ENCODE measurements at regions of chr2 and their contacts with region 1.

Region 1: GRCh38 chr2:118046634-118047210 is 32.9 kb upstream of the CCDC93 start:
- DNase-seq: no peak
- ATAC-seq: peak; percentile 44; the same call in 2 of the 3 replicates
- H3K4me3 ChIP-seq: no peak overlapping the region
- H3K27ac ChIP-seq: no peak overlapping the region
- H3K4me1 ChIP-seq: peaks cover 7% of the 10 kb centered on the region; the same call in 1 of the 2 replicates
- H3K27me3 ChIP-seq: peaks cover 0 to 5% of the 10 kb centered on the region in 2 experiments; a peak in 2 of 4 replicates
- CTCF ChIP-seq: peak; percentile 50 to 73 (median 59)
- EP300 ChIP-seq: no peak
- POLR2A ChIP-seq: no peak
- RAD21 ChIP-seq: peak; percentile 94

Region 2: DNA sequence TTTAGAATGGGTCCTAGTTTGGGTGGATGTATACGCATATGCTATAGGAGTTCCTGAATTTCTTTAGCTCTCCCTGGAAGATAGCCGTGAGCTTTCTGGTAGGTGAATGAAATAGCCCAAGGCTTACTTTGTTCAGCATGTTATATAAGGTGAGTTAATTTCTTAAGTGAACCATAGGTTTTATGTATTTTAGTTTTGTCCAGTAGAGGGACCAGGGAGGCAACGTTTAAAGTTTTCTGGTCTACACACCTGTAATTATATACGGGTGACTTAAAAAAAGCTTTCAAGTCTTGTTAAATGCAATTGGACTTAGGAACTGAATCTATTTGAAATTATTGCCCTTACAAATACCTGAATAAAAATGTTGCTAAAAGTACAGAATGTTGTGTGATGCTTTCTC is 634.7 kb before region 1 on chr2:
- CTCF ChIA-PET with region 1: no interaction called
- POLR2A ChIA-PET with region 1: no interaction called
- RAD21 ChIA-PET with region 1: no interaction called
- SMC1A ChIA-PET with region 1: no interaction called
- in situ Hi-C with region 1: no loop called
- intact Hi-C with region 1: no loop called
- DNase-seq: no peak
- ATAC-seq: no peak
- H3K4me3 ChIP-seq: no peak overlapping the region
- H3K27ac ChIP-seq: no peak overlapping the region
- H3K4me1 ChIP-seq: no peaks in the 10 kb centered on the region
- H3K27me3 ChIP-seq: no peaks in the 10 kb centered on the region
- CTCF ChIP-seq: no peak; a peak in 1 of 6 replicates
- EP300 ChIP-seq: no peak
- POLR2A ChIP-seq: no peak
- RAD21 ChIP-seq: no peak

Region 3: GRCh38 chr2:118061135-118061955 is 14.6 kb after region 1 on chr2:
- CTCF ChIA-PET with region 1: interaction called, 626 read pairs
- POLR2A ChIA-PET with region 1: interaction called, 7 read pairs
- RAD21 ChIA-PET with region 1: interaction called, 266 read pairs
- SMC1A ChIA-PET with region 1: interaction called, 358 read pairs
- in situ Hi-C with region 1: no loop called
- intact Hi-C with region 1: loop called (anchors 1 kb)
- DNase-seq: peak; percentile 57
- ATAC-seq: peak; percentile 87
- H3K4me3 ChIP-seq: no peak overlapping the region
- H3K27ac ChIP-seq: no peak overlapping the region
- H3K4me1 ChIP-seq: peaks cover 27% of the 10 kb centered on the region
- H3K27me3 ChIP-seq: no peaks in the 10 kb centered on the region
- CTCF ChIP-seq: peak; percentile 67 to 76 (median 68)
- EP300 ChIP-seq: no peak
- POLR2A ChIP-seq: no peak
- RAD21 ChIP-seq: peak; percentile 98

Region 4: GRCh38 chr2:118095610-118096009 is 48.9 kb after region 1 on chr2:
- CTCF ChIA-PET with region 1: interaction called, 10 read pairs
- POLR2A ChIA-PET with region 1: no interaction called
- RAD21 ChIA-PET with region 1: interaction called, 8 read pairs
- SMC1A ChIA-PET with region 1: interaction called, 29 read pairs
- in situ Hi-C with region 1: no loop called
- intact Hi-C with region 1: no loop called
- DNase-seq: no peak
- ATAC-seq: peak; percentile 49
- H3K4me3 ChIP-seq: no peak overlapping the region
- H3K27ac ChIP-seq: no peak overlapping the region
- H3K4me1 ChIP-seq: peaks cover 2% of the 10 kb centered on the region; the same call in 1 of the 2 replicates
- H3K27me3 ChIP-seq: no peaks in the 10 kb centered on the region
- CTCF ChIP-seq: no peak
- EP300 ChIP-seq: no peak
- POLR2A ChIP-seq: no peak
- RAD21 ChIP-seq: no peak

Region 5: DNA sequence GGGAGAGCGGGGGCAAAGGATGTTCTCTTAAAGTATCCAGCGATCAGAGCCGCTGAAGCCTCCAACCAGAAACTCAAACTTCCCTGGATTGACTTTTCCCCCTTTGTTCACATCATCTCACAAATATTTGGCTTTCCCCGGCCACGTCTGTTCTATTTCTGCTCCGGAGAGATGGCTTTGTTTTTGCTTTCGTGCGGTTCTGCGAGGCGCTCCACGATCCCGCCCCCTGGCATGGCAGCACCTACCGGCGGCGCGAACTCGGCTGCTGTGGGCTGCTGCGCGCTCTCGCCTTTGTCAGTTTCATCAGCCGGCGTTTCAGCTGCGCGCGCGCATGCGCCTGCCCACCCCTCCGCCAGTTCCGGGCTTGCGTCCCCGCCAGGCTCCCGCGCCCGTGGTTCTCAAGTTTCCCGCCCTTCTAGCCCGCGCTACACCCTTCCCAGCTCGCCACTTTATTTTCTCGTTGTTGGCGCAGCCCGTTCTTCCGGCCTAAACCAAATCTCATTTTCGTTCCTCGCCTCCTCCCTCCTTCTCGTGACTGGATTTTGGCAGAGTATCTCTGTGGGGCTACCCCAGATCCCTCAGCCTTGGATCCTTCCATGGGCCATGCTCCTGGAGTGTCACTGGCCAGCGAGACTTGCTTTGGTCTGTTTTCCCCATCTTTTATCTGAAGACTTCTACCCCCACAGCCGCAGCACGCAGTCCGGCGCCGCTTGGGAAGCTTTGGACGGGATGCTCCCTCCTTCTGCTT is 139.6 kb after region 1 on chr2:
- CTCF ChIA-PET with region 1: interaction called, 21 read pairs
- POLR2A ChIA-PET with region 1: no interaction called
- RAD21 ChIA-PET with region 1: interaction called, 11 read pairs
- SMC1A ChIA-PET with region 1: interaction called, 8 read pairs
- in situ Hi-C with region 1: no loop called
- intact Hi-C with region 1: no loop called
- DNase-seq: peak; percentile 44
- ATAC-seq: peak; percentile 96
- H3K4me3 ChIP-seq: peak overlapping the region; percentile 75
- H3K27ac ChIP-seq: peak overlapping the region; percentile 39; the same call in 1 of the 2 replicates
- H3K4me1 ChIP-seq: peaks cover 3% of the 10 kb centered on the region
- H3K27me3 ChIP-seq: no peaks in the 10 kb centered on the region; a peak in 3 of 4 replicates
- CTCF ChIP-seq: no peak; a peak in 1 of 6 replicates
- EP300 ChIP-seq: no peak
- POLR2A ChIP-seq: peak; percentile 86
- RAD21 ChIP-seq: no peak

Region 6: GRCh38 chr2:118221666-118222594 is 175.2 kb after region 1 on chr2:
- CTCF ChIA-PET with region 1: interaction called, 17 read pairs
- POLR2A ChIA-PET with region 1: no interaction called
- RAD21 ChIA-PET with region 1: interaction called, 7 read pairs
- SMC1A ChIA-PET with region 1: interaction called, 20 read pairs
- in situ Hi-C with region 1: no loop called
- intact Hi-C with region 1: loop called (anchors 5 kb)
- DNase-seq: no peak
- ATAC-seq: peak; percentile 79
- H3K4me3 ChIP-seq: no peak overlapping the region
- H3K27ac ChIP-seq: no peak overlapping the region
- H3K4me1 ChIP-seq: peaks cover 15% of the 10 kb centered on the region; the same call in 1 of the 2 replicates
- H3K27me3 ChIP-seq: no peaks in the 10 kb centered on the region
- CTCF ChIP-seq: peak; percentile 61 to 88 (median 64)
- EP300 ChIP-seq: no peak
- POLR2A ChIP-seq: no peak
- RAD21 ChIP-seq: peak; percentile 91